ENCODE measurements at regions of chr11 and their contacts with region 1.

Region 1: DNA sequence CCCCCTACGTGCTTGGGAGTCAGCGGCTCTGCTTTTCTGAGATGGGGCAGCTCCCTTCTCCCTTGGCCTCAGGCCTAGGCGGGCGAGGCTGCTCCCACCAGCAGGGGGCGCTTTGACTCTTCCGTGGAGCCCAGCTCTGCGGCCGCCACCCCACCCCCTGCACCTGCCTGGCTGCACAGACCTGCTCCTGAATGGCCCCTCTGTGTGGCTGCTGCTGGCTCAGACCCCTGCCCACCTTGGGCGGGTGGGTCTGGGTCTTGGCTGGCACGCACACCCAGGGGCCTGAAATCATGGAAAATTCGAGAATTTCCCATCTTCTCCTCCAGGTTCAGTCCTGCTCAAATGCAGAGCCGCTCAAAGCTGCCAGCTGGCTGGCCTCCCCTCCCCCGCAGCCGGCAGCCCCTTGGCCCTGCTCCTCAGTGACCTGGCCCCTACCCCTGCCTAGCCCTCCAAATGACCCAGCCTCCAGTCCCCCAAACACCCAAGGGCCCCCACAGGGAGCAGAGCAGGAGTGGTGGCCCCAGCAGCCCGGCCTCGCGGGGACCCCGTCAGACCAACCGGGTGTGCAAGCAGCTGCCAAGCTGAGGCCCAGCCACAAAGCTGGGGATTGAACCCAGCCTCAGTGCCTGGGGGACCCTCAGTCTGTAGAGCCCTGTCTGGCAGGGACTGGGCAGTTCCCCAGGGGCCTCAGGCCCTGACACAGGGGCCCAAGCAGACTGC is 9.0 kb downstream of the PRR33 start:
- DNase-seq: peak; percentile 82
- H3K27ac ChIP-seq: peak overlapping the region; percentile 100
- CTCF ChIP-seq: peak; percentile 88

Region 2: GRCh38 chr11:1478544-1478943 is 404.1 kb before region 1 on chr11:
- CTCF ChIA-PET with region 1: no interaction called
- POLR2A ChIA-PET with region 1: no interaction called
- DNase-seq: no peak
- H3K27ac ChIP-seq: peak overlapping the region; percentile 26
- CTCF ChIP-seq: no peak

Region 3: GRCh38 chr11:1832211-1832919 is 50.3 kb before region 1 on chr11:
- CTCF ChIA-PET with region 1: interaction called, 15 read pairs
- POLR2A ChIA-PET with region 1: no interaction called
- DNase-seq: no peak
- H3K27ac ChIP-seq: peak overlapping the region; percentile 97
- CTCF ChIP-seq: peak; percentile 92

Region 4: DNA sequence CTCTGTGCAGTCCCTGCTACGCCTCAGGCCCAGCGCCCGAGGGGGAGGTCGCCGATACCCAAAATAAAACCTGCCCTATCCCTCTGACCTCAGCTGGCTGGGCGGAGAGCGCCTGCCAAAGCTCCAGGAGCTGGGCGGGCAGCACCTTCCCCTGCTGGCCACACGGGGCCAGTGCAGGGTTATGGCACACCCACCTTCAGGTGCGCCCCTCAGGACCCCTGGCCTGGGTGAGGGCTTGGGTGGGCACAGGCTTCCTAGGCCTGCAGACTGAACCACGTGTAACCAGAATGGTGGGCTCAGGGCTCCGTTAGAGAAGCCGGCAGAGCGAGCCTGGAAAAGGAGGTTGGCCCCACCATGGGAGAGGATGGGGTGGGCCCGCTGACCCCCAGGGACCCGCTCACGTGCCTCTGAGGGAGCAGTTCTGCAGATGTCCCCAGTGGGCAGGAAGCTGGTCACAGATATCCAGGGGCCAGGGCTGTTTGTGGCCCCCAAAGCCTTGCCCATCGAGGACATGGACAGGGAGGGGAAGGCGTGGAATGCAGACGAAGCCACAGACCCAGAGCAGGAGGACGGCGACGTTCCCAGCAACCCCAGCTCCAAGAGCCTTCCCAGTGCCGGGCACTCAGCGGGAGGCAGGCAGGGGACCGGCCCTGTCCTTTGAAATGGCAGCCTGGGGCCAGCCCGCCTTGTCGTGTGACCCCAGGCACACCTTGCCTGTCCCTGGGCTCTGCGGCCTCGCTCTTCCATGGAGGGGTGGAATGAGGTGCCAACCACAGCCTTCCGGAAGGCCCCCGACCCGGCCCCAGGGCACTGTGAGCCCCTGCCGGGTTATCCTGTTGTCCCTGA is 35.2 kb after region 1 on chr11:
- CTCF ChIA-PET with region 1: interaction called, 18 read pairs
- POLR2A ChIA-PET with region 1: no interaction called
- DNase-seq: no peak
- H3K27ac ChIP-seq: peak overlapping the region; percentile 76
- CTCF ChIP-seq: peak; percentile 33

Region 5: DNA sequence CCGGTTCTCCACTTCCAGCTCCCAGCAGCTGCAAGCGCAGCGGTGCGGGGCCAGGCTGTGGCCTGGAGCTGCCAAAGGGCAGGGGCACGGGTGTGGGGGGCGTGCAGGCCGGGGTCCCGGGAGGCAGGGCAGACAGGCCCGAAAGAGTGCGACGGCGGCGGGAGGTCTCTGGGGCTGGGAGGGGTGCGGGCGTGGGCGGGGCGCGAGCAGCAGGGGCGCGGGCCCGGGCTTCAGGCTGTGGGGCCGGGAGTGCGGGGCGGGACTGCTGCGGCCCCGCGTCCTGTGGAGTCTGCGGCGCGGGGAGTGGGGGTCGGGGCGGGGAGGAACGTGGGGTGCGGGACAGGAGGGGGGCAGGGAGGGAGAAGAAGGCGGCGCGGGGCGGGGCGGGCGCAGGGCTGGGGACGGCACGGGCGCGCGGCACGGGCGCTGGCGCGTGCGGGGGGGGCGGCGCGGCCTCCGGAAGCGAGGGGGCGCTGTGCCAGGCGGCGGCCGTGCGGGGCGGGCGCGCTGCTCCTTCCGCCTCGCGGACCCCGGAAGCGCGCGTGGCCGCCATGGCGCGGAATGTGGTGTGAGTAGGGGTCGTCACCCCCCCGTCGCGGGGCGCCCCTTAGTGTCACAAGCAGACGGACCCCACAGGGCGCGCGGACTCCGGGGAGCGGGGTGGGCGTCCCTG is 64.3 kb after region 1 on chr11 and contains the start of gene MRPL23:
- CTCF ChIA-PET with region 1: interaction called, 16 read pairs
- POLR2A ChIA-PET with region 1: no interaction called
- DNase-seq: no peak
- H3K27ac ChIP-seq: no peak within 1 kb of the TSS
- CTCF ChIP-seq: no peak

Region 6: GRCh38 chr11:1953489-1954266 is 71.0 kb after region 1 on chr11:
- CTCF ChIA-PET with region 1: interaction called, 16 read pairs
- POLR2A ChIA-PET with region 1: no interaction called
- DNase-seq: no peak
- H3K27ac ChIP-seq: no peak overlapping the region
- CTCF ChIP-seq: no peak

Region 7: DNA sequence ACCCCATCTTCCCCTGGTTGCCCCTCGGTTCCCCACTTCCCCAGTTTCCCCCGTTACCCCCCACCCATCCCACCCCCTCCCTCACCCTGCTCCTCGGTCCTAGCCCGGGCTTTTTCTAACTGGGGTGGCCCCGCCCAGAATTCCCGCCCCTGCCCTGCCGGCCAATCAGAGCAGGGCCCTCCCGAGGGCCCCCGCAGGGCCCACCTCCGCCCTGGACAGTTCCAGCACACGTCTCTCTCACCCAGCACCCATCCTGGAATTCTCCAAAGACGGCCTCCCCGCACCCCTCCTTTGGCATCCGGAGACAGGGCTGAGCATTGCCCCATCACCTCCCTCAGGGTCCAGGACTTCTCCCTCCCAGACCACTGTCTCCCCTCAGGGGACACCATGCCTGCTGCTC is 115.1 kb after region 1 on chr11 and contains the start of gene H19:
- CTCF ChIA-PET with region 1: interaction called, 13 read pairs
- POLR2A ChIA-PET with region 1: no interaction called
- DNase-seq: no peak
- H3K27ac ChIP-seq: no peak within 1 kb of the TSS
- CTCF ChIP-seq: no peak

Measured in RWPE1 (cell line).